ENCODE measurements at regions of chr1 and their contacts with region 1.

Region 1: DNA sequence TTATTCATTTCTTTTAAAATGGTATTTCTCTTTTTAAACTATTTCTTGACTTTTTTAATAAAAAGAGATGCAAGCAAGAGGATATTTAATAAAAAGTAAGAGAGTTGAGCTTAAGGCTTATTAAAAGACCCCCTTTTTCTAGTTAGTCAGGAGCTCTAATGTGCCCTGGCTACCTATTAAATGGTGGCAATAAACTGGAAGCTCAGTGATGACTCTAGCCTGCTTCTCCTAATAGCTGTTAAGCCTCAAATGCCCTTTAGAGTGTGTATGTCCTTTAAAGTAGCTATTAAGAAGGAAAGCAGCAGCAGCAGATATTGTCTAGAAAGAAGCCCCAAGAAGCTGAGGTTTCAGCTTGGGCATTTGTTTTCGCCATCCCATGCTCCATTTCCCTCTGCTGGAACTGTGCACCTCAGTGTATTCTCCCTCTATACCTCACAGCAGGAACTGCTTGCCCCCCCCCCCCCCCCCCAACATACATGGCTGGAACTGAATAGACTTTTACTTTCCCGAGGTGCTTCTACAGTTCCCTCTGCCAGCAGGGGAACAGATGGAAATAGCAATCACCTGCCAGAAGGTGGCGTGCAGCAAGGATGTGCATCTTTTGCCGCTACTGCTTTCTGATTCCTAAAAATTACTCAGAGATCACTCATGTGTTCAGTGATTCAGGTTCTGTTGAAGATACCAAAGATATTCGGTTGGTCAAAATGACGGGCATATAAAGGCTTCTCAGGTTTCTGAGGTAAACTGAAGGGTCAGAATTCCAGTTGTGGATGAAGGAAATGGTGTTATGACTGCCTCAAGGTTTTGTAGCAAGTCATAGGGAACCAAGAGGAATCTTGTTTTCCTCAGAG is 2.5 kb downstream of the RGS4 start:
- DNase-seq: peak; percentile 56 to 75 (median 61)
- ATAC-seq: peak; percentile 40 to 67
- H3K4me3 ChIP-seq: peak overlapping the region; percentile 26
- H3K27ac ChIP-seq: no peak overlapping the region
- H3K4me1 ChIP-seq: no peaks in the 10 kb centered on the region
- H3K27me3 ChIP-seq: peaks cover 3% of the 10 kb centered on the region

Region 2: GRCh38 chr1:162878000-162878596 is 193.5 kb before region 1 on chr1:
- intact Hi-C with region 1: loop called in 3 of 4 experiments (anchors 5 to 10 kb)
- DNase-seq: peak; percentile 33 to 59 (median 45)
- ATAC-seq: peak; percentile 64 to 65
- H3K4me3 ChIP-seq: no peak overlapping the region
- H3K27ac ChIP-seq: no peak overlapping the region
- H3K4me1 ChIP-seq: no peaks in the 10 kb centered on the region
- H3K27me3 ChIP-seq: no peaks in the 10 kb centered on the region

Region 3: GRCh38 chr1:163174524-163175437 is 103.2 kb after region 1 on chr1:
- intact Hi-C with region 1: loop called (anchors 2 to 10 kb)
- DNase-seq: peak; percentile 68 to 89 (median 84)
- ATAC-seq: peak; percentile 77 to 79
- H3K4me3 ChIP-seq: peak overlapping the region; percentile 1
- H3K27ac ChIP-seq: no peak overlapping the region
- H3K4me1 ChIP-seq: no peaks in the 10 kb centered on the region
- H3K27me3 ChIP-seq: no peaks in the 10 kb centered on the region

Region 4: DNA sequence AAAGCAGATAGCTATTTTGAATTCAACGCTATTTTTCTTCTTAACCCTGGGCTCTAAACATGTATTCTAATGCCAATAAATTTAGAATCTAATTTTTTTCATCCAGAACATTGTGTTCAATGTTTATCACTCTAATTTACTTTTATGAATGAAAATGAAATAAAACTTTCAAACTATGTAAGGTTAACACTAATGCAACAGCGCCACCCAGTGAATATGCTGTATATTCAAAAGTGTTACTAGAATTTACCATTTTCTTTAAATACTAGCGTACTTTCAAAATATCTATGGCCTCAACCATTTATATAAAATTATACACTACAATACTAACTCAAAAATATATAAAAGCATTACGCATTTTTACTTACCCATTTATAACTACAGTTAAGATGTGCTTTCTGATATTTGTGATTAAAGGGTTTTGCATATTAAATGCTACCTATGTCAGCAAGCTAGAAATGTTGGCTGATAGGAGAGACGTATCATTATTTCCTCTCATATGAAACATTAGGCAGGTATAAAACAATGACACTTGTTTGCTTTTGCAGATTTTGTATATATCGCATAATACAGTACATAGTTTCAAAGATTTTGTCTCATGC is 244.2 kb after region 1 on chr1:
- intact Hi-C with region 1: loop called in 3 of 4 experiments (anchors 5 to 10 kb)
- DNase-seq: peak in 1 of 3 donors; percentile 14
- ATAC-seq: no peak
- H3K4me3 ChIP-seq: no peak overlapping the region
- H3K27ac ChIP-seq: no peak overlapping the region
- H3K4me1 ChIP-seq: no peaks in the 10 kb centered on the region
- H3K27me3 ChIP-seq: no peaks in the 10 kb centered on the region

Region 5: GRCh38 chr1:163321311-163322305 is 250.0 kb after region 1 on chr1 and contains the start of gene NUF2:
- intact Hi-C with region 1: loop called in 2 of 4 experiments (anchors 5 to 10 kb)
- DNase-seq: peak; percentile 98 to 99 (median 99)
- ATAC-seq: peak; percentile 100
- H3K4me3 ChIP-seq: peak within 1 kb of the TSS; percentile 85
- H3K27ac ChIP-seq: no peak within 1 kb of the TSS
- H3K4me1 ChIP-seq: no peaks in the 10 kb centered on the region
- H3K27me3 ChIP-seq: no peaks in the 10 kb centered on the region
- total RNA-seq, gene NUF2: 0.57 to 0.74 (median 0.71) TPM in 3 of 4 donors, not detected in the other

Measured in right cardiac atrium (tissue), 5 donors.